Mammary epithelial cell (primary cell): ENCODE measurements at regions of chr10 and their contacts with region 1.

Region 1: DNA sequence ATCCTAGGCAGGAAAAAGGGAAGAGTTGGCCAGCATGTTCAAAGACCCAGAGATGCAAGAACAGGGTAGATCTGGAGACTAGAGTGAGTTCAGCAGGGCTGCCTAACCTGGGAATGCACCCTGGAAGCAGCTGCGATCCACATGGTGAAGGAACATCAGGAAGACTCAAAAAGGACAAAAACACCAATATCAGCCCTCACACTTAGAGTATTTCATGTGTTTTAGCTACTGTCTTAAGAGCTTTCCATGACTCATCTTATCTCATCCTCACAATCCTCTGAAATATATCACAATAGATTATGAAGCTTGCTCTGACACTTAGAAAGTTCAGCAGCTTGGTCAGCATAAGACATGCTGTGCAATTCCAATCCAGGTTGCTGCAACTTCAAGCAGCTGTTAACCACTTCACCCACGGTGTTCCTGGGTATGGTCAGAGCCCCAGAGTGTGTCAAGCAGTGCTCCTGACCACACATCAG is 380.9 kb downstream of the PARD3 start:
- DNase-seq: peak; percentile 28
- H3K4me3 ChIP-seq: no peak overlapping the region
- H3K27ac ChIP-seq: no peak overlapping the region
- H3K4me1 ChIP-seq: peaks cover 21% of the 10 kb centered on the region
- H3K27me3 ChIP-seq: no peaks in the 10 kb centered on the region
- CTCF ChIP-seq: no peak

Region 2: DNA sequence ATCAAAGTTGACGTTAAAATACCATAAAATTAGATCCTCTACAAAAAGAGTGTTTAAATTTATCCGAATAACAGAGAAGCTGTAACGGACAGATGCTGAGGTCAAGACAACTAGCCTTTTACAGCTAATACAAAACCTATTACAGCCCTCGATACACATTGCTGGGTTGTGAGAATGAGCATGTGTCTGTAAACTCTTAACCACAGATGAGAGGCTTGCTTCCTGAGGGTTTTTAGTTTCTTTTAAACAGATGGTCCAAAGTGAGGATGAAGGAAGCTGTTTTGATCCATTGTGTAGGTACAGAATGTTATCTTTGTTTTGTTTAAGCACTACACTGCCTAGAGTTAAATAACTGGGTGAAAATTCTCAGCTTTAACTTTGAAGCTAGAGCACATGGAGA is 197.2 kb before region 1 on chr10:
- CTCF ChIA-PET with region 1: no interaction called
- dilution Hi-C with region 1: no loop called
- in situ Hi-C with region 1: no loop called
- intact Hi-C with region 1: no loop called
- DNase-seq: no peak
- H3K4me3 ChIP-seq: no peak overlapping the region
- H3K27ac ChIP-seq: no peak overlapping the region
- H3K4me1 ChIP-seq: no peaks in the 10 kb centered on the region
- H3K27me3 ChIP-seq: no peaks in the 10 kb centered on the region
- CTCF ChIP-seq: no peak

Region 3: GRCh38 chr10:34467902-34468301 is 33.7 kb after region 1 on chr10:
- CTCF ChIA-PET with region 1: no interaction called
- dilution Hi-C with region 1: no loop called
- in situ Hi-C with region 1: no loop called
- intact Hi-C with region 1: loop called (anchors 5 kb)
- DNase-seq: no peak
- H3K4me3 ChIP-seq: no peak overlapping the region
- H3K27ac ChIP-seq: no peak overlapping the region
- H3K4me1 ChIP-seq: peaks cover 2% of the 10 kb centered on the region
- H3K27me3 ChIP-seq: no peaks in the 10 kb centered on the region
- CTCF ChIP-seq: no peak

Region 4: GRCh38 chr10:34489973-34490745 is 56.0 kb after region 1 on chr10:
- CTCF ChIA-PET with region 1: no interaction called
- dilution Hi-C with region 1: loop called (anchors 10 kb)
- in situ Hi-C with region 1: no loop called
- intact Hi-C with region 1: no loop called
- DNase-seq: peak; percentile 86
- H3K4me3 ChIP-seq: peak overlapping the region in 2 of 3 experiments; percentile 34
- H3K27ac ChIP-seq: peak overlapping the region; percentile 89
- H3K4me1 ChIP-seq: peaks cover 15% of the 10 kb centered on the region
- H3K27me3 ChIP-seq: no peaks in the 10 kb centered on the region
- CTCF ChIP-seq: peak in 1 of 2 donors; percentile 41